Activated CD4-positive, alpha-beta memory T cell treated with anti-CD3 and anti-CD28 coated beads for 36 hours (primary cell): ENCODE measurements at regions of chr11 and their contacts with region 1.

Region 1: GRCh38 chr11:121292495-121293287 is at the start of gene SC5D:
- DNase-seq: peak; percentile 96
- H3K4me3 Mint-ChIP-seq: peak within 1 kb of the TSS; percentile 95
- H3K27ac Mint-ChIP-seq: peak within 1 kb of the TSS; percentile 95
- H3K4me1 Mint-ChIP-seq: peaks cover 41% of the 10 kb centered on the region
- H3K27me3 Mint-ChIP-seq: no peaks in the 10 kb centered on the region
- total RNA-seq, gene SC5D: 23.3 to 24.7 TPM

Region 2: GRCh38 chr11:121249039-121249663 is 43.5 kb before region 1 on chr11:
- CTCF ChIA-PET with region 1: no interaction called
- POLR2A ChIA-PET with region 1: interaction called, 7 read pairs
- intact Hi-C with region 1: loop called (anchors 1 kb)
- DNase-seq: peak; percentile 62
- H3K4me3 Mint-ChIP-seq: no peak overlapping the region
- H3K27ac Mint-ChIP-seq: peak overlapping the region; percentile 25
- H3K4me1 Mint-ChIP-seq: peaks cover 2% of the 10 kb centered on the region
- H3K27me3 Mint-ChIP-seq: peaks cover 6% of the 10 kb centered on the region

Region 3: DNA sequence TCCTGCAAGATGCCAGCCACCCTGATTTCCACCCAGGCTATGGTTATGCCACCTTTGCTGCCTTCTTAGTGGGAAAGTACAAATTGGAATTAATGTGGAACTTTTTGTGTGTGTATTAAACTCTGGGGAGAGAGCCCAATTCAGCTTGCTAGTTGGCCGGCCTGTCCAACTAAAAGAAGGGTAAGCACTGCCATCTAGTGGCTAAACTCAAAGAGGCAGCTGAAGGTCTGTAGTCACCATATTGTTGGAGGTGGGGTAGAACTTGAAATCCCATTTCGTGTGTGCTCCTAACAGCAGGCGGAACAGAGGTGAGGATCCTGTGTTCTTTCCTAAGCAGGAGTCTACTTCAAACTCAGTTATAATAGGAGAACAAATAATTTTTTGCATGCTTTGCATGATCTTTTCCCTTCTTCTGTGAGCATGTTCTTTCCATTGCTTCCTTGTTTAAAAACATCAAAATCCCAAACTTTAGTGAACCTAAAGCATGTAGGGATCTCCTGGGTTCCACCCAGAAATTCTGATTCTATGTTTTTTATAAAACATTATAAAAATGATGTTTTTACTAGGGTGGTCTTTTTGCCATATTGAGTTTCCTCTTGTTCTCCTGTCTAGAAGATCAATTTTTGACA is 298.8 kb after region 1 on chr11:
- CTCF ChIA-PET with region 1: interaction called, 21 read pairs
- POLR2A ChIA-PET with region 1: no interaction called
- intact Hi-C with region 1: no loop called
- DNase-seq: peak; percentile 76
- H3K4me3 Mint-ChIP-seq: no peak overlapping the region
- H3K27ac Mint-ChIP-seq: peak overlapping the region; percentile 52
- H3K4me1 Mint-ChIP-seq: peaks cover 25% of the 10 kb centered on the region
- H3K27me3 Mint-ChIP-seq: no peaks in the 10 kb centered on the region

Region 4: DNA sequence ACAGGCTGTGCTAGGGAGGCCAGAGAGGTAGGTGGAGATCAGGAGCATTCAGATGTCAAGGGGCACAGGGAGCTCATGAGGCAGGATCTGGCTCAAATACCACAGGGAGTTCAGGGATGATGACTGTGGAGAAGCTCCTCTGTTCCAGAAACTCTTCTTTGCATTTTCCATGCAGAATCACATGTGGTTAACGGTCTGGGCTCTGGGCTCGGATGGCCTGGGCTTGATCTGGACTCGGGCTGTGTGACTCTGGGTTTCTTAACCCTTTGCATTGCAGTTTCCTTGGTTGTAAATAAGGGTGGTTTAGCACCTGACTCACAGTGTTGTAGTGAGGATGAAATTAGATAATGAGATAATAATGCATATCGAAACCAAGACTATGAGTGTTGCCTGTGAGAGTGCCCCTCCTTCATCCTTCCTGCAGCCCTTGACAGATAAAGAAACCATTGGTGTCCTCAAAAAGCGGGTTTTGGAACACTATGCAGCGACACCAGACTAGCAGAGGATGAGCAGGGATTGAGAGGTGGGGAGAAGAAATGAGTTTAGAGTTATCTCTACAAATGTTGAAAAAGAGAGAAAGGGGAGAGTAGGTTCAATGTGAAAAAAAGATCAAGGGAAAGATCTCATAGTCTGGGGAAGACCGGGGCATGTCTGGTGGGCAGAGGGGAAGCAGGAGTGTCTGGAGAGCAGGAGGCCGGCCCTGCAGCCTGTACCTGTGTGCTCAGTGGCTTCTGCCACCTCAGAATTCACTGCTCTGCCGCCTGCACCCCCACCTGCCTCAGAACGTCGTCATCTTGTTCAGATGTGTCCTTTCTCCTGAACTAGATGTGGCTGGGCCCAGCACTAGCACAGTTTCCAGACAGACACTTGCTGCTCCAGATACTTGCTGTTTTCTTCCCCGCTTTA is 357.9 kb after region 1 on chr11:
- CTCF ChIA-PET with region 1: no interaction called
- POLR2A ChIA-PET with region 1: no interaction called
- intact Hi-C with region 1: loop called (anchors 1 kb)
- DNase-seq: peak; percentile 50
- H3K4me3 Mint-ChIP-seq: peak overlapping the region; percentile 21
- H3K27ac Mint-ChIP-seq: peak overlapping the region; percentile 51
- H3K4me1 Mint-ChIP-seq: peaks cover 28% of the 10 kb centered on the region
- H3K27me3 Mint-ChIP-seq: no peaks in the 10 kb centered on the region